HepG2 (cell line): ENCODE measurements at regions of chr20 and their contacts with region 1.

Region 1: DNA sequence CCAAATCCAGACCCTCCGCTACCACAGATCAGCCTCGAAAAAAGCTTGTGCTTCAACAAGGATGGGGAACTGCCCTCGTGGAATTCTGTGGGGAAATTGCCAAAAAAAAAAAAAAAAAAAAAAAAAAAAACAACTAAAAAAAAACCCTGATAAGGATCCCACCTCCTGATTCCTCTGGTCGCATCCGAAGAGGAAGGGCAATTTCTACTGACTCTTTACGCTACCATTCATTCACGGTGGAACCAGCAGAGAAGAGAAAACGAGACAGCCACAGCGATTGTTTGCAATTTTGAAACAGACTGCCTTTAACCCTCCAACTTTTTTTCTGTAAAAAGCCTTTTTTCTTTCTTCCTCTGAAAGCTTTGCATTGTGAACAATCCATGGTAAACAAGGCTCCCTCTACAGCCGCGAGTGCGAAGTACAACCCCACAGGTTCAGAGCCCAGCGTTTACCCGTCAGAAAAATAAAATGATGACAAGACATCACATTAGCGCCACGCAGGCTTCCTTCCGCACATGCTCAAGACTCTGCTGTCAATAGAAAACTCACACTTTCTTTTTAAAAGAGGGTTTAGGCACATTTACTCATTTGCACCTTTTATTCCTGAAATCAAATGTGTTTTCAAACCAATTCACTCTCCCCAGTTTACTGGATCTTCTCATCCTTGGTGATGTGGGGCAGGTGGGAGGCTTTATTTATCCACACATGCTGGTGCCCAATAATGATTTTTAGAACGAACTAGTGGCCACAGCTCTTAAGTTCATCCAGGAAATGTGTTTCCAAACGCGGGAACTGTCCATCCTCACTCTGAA is 100.0 kb downstream of the NOL4L start:
- DNase-seq: peak; percentile 87
- ATAC-seq: peak; percentile 52
- H3K4me3 ChIP-seq: peak overlapping the region; percentile 74 to 90 (median 83)
- H3K27ac ChIP-seq: peak overlapping the region; percentile 76
- H3K4me1 ChIP-seq: peaks cover 42% of the 10 kb centered on the region
- H3K27me3 ChIP-seq: no peaks in the 10 kb centered on the region
- CTCF ChIP-seq: peak; percentile 87
- EP300 ChIP-seq: peak in 1 of 2 experiments; percentile 54; a peak in 2 of 4 replicates
- POLR2A ChIP-seq: no peak
- RAD21 ChIP-seq: peak; percentile 73

Region 2: DNA sequence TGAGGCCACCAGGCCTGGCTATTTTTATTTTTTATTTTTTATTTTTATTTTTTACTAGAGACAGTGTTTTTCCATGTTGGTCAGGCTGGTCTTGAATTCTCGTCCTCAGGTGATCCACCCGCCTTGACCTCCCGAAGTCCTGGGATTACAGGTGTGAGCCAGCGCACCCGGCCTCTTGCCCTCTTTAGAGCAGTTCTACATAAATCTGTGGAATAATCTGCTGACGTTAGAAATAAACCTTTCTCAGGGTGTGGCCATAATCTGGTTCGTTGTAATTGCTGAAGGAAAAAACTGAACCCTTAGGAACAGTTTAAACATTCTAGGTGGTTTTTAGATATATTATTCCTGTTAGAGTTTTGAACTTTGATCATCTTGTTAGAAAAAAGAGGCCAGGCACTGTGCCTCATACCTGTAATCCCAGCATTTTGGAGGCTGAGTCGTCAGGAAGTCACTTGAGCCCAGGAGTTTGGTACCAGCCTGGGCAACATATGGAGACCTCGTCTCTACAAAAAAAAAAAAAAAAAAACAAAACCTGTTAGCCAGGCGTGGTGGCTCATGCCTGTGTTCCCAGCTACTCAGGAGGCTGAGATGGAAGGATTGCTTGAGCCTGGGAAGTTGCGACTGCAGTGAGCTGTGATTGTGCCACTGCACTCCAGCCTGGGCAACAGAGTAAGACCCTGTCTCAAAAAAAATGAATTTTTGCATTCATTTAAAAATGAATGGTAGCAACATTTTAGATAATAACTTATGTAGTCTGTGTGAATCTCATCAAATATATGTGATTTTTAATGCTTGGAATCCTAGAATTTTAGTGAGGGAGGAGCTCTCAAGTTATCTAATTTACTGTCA is 102.8 kb before region 1 on chr20:
- CTCF ChIA-PET with region 1: no interaction called
- POLR2A ChIA-PET with region 1: no interaction called
- in situ Hi-C with region 1: no loop called
- intact Hi-C with region 1: loop called (anchors 5 kb)
- DNase-seq: no peak
- ATAC-seq: no peak
- H3K4me3 ChIP-seq: no peak overlapping the region
- H3K27ac ChIP-seq: no peak overlapping the region
- H3K4me1 ChIP-seq: peaks cover 60% of the 10 kb centered on the region
- H3K27me3 ChIP-seq: no peaks in the 10 kb centered on the region
- CTCF ChIP-seq: no peak
- EP300 ChIP-seq: no peak
- POLR2A ChIP-seq: no peak
- RAD21 ChIP-seq: no peak

Region 3: GRCh38 chr20:32437391-32438074 is 47.6 kb before region 1 on chr20:
- CTCF ChIA-PET with region 1: interaction called, 16 read pairs
- POLR2A ChIA-PET with region 1: no interaction called
- in situ Hi-C with region 1: no loop called
- intact Hi-C with region 1: loop called (anchors 2 kb)
- DNase-seq: peak; percentile 77
- ATAC-seq: peak; percentile 60
- H3K4me3 ChIP-seq: no peak overlapping the region
- H3K27ac ChIP-seq: no peak overlapping the region
- H3K4me1 ChIP-seq: peaks cover 44% of the 10 kb centered on the region
- H3K27me3 ChIP-seq: no peaks in the 10 kb centered on the region
- CTCF ChIP-seq: peak; percentile 84
- EP300 ChIP-seq: peak in 1 of 2 experiments; percentile 21; a peak in 1 of 4 replicates
- POLR2A ChIP-seq: peak in 1 of 2 experiments; percentile 38; a peak in 2 of 4 replicates
- RAD21 ChIP-seq: peak; percentile 87

Region 4: GRCh38 chr20:32516583-32517517 is 31.7 kb after region 1 on chr20:
- CTCF ChIA-PET with region 1: no interaction called
- POLR2A ChIA-PET with region 1: no interaction called
- in situ Hi-C with region 1: no loop called
- intact Hi-C with region 1: no loop called
- DNase-seq: no peak
- ATAC-seq: no peak
- H3K4me3 ChIP-seq: no peak overlapping the region
- H3K27ac ChIP-seq: no peak overlapping the region
- H3K4me1 ChIP-seq: peaks cover 22% of the 10 kb centered on the region
- H3K27me3 ChIP-seq: no peaks in the 10 kb centered on the region
- CTCF ChIP-seq: no peak
- EP300 ChIP-seq: no peak
- POLR2A ChIP-seq: no peak
- RAD21 ChIP-seq: no peak